HEK293 (cell line): ENCODE measurements at regions of chr11 and their contacts with region 1.

Region 1: DNA sequence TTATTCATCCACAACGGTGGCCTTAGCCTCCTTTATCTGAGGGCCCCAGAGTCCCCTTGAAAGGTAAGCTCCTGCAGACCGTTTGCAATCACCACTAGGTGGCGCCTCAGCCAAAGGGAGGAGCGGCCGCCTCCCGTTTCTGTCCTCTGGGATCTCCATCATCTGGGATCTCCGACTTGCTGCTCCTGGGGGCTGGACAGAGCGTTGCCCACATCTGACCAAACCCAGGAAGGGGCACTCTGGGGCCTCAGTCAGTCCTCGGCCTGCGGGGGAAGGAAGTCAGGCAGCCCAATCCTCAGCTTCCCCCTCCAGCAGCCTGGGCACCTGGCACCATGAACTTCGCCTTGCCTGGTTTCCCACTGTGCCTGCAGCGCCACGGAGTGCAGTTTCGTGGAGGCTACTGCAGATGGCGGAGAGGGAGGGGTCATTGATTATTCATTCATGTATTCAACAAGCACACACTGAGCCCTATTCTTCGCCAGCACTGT is 23.5 kb downstream of the TP53I11 start:
- H3K4me3 ChIP-seq: no peak overlapping the region
- H3K27ac ChIP-seq: no peak overlapping the region
- H3K4me1 ChIP-seq: no peaks in the 10 kb centered on the region
- CTCF ChIP-seq: peak; percentile 70

Region 2: DNA sequence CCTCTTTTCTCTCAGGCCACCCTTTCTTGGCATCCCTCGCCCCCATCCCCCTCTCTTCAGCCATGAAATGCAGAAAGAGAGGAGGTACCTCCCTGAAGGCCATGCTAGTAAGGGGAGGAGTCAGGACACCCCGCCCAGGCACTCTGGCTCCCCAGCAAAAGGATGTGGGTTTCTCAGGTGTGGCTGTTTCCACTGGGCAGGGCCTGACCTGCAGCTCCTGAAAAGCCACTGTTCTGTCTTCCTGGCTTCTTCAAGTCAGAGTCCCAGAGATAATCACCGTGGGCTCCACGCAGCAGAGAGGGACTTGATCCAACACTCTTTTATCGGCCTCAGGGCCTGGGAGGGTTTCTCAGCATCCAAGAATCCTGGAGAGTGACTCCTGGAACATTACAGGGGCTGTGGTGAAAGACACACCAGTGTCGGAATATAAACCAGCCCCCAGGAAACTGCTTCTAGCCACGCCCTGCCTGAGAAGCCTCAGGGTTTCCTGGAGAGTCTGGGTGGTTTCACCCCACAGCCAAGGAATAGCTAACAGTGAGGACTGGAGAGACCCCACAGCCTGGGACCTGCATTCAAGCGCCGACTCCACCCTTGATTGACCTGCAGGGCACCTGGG is 246.1 kb before region 1 on chr11:
- CTCF ChIA-PET with region 1: no interaction called
- POLR2A ChIA-PET with region 1: no interaction called
- H3K4me3 ChIP-seq: no peak overlapping the region
- H3K27ac ChIP-seq: no peak overlapping the region
- H3K4me1 ChIP-seq: no peaks in the 10 kb centered on the region
- CTCF ChIP-seq: no peak

Region 3: DNA sequence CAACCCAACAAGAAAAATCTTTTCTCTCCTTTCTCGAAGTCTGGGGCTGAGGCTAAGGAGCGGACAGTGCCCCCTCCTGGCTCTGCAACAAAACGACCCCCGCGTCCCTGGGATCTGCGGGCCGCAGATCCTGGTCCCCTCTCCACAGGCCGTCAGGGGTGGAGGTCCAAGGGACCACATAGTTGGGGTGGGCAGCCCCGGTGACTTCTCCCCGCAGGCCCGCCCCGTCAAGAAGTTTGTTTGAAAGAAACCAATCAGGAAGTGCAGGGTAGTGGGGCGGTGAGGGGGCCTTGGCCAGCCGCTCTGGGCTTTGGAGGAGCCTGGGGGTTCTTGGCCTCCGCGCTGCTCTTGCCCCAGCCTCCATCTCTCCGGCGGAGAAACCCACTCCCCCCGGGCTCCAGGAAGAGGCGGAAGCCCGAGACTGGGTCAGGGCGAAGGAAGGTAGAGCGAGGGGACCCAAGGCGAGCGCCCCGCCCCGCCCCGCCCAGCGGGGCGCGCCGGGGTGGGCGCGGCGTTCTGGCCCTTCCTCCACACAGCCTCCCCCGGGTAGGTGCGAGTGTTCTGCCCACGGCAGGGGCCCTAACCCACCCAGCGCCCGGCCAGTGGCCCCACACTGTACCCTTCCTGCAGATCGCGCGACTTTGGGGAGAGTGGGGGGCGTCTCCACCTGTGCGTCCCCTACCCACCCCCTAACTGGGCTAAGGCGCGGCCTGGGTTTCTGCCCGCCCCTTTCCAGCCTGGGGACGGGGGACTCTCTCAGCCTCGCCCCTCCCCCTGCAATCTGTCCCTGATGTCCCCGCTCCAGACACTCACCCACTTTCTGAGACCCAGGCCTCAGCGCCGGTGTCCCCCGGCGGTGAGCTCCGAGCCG is 22.2 kb after region 1 on chr11:
- CTCF ChIA-PET with region 1: interaction called, 11 read pairs
- POLR2A ChIA-PET with region 1: interaction called, 3 read pairs
- H3K4me3 ChIP-seq: peak overlapping the region; percentile 71
- H3K27ac ChIP-seq: no peak overlapping the region; the same call in 1 of the 2 replicates
- H3K4me1 ChIP-seq: no peaks in the 10 kb centered on the region
- CTCF ChIP-seq: no peak

Region 4: GRCh38 chr11:45021001-45021400 is 93.8 kb after region 1 on chr11:
- CTCF ChIA-PET with region 1: no interaction called
- POLR2A ChIA-PET with region 1: no interaction called
- H3K4me3 ChIP-seq: no peak overlapping the region
- H3K27ac ChIP-seq: no peak overlapping the region
- H3K4me1 ChIP-seq: no peaks in the 10 kb centered on the region; the same call in 1 of the 2 replicates
- CTCF ChIP-seq: no peak